Activated CD4-positive, alpha-beta T cell treated with anti-CD3 and anti-CD28 coated beads, Interleukin-2, amount 10 ng/mL, durations not matched to agents 24 days and 14 days (primary cell): ENCODE measurements at regions of chr14 and their contacts with region 1.

Region 1: GRCh38 chr14:94707494-94707893 is 62.4 kb downstream of the GSC start:
- DNase-seq: no peak
- H3K4me3 Mint-ChIP-seq: no peak overlapping the region
- H3K27ac Mint-ChIP-seq: no peak overlapping the region
- H3K4me1 Mint-ChIP-seq: no peaks in the 10 kb centered on the region
- H3K27me3 Mint-ChIP-seq: peaks cover 3% of the 10 kb centered on the region

Region 2: GRCh38 chr14:94960285-94960996 is 252.9 kb after region 1 on chr14:
- intact Hi-C with region 1: no loop called
- DNase-seq: no peak
- H3K4me3 Mint-ChIP-seq: no peak overlapping the region
- H3K27ac Mint-ChIP-seq: no peak overlapping the region
- H3K4me1 Mint-ChIP-seq: no peaks in the 10 kb centered on the region
- H3K27me3 Mint-ChIP-seq: peaks cover 8% of the 10 kb centered on the region

Region 3: GRCh38 chr14:95011445-95012006 is 304.0 kb after region 1 on chr14:
- intact Hi-C with region 1: no loop called
- DNase-seq: no peak
- H3K4me3 Mint-ChIP-seq: no peak overlapping the region
- H3K27ac Mint-ChIP-seq: no peak overlapping the region
- H3K4me1 Mint-ChIP-seq: no peaks in the 10 kb centered on the region
- H3K27me3 Mint-ChIP-seq: peaks cover 10% of the 10 kb centered on the region

Region 4: GRCh38 chr14:95196290-95196689 is 488.8 kb after region 1 on chr14:
- intact Hi-C with region 1: loop called (anchors 10 kb)
- DNase-seq: peak; percentile 66
- H3K4me3 Mint-ChIP-seq: no peak overlapping the region
- H3K27ac Mint-ChIP-seq: no peak overlapping the region
- H3K4me1 Mint-ChIP-seq: peaks cover 2% of the 10 kb centered on the region
- H3K27me3 Mint-ChIP-seq: no peaks in the 10 kb centered on the region